Cardiac septum (tissue), 1 donor: ENCODE measurements at regions of chr15 and their contacts with region 1.

Region 1: DNA sequence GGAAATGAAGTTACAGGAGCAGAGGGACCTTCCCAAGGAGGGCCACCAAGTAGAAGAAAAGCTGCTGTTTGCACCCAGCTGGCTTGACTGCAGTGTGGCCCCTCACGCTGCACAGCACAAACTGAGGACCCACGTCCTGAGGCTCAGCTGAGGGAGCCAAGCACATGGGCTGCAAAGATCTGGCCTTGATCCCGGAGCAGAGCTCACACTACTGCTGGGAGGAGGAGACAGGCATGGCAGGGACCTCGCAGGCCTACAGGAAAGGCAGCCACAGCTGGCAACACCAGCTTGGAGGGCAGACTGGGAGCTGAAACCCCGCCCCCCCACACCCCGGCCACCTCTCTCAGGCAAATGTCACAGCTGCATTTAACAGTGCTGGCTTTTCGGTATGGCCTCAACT is 39.7 kb downstream of the KLHL25 start:
- DNase-seq: peak; percentile 80

Region 2: DNA sequence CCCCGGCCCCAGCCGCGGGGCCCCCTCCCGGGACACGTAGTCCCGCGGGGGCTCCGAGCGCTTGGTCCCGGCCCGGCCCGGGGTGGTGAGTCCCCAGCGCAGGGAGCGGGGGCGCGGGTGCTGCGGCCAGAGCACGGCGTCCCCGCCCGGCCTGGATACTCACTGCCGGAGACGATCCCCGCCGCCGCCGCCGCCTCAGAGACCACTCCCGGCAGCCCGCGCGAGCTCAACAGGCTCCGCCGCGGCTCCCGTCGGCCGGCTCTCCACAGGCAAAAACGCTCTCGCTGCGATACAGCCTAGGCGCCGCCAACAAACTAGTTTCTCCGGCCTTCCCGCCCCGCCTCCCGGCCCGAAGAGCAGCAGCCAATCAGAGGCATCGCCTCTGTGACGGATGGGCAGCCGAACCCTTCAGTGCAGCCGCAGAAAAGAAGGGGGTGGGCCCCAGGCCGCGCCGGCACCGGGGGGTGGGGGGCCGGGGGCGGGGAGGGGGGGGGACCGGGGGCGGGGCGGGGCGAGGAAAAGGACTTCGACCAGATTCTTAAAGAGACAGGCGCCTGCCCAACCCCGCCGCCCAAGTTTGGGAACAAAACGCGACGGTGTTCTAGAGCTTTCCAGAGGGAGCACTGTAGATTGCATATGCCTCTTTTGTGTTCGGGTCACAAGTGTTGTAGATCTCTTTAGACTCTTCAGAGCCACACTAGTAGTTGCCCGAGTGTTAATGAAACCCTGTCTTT is 39.8 kb after region 1 on chr15 and contains the start of gene KLHL25:
- intact Hi-C with region 1: loop called (anchors 5 kb)
- DNase-seq: peak; percentile 98
- total RNA-seq, gene KLHL25: 5.1 TPM

Region 3: GRCh38 chr15:86373147-86373546 is 618.2 kb after region 1 on chr15:
- intact Hi-C with region 1: no loop called
- DNase-seq: no peak